Adrenal gland (tissue), 19 donors: ENCODE measurements at regions of chr17 and their contacts with region 1.

Region 1: DNA sequence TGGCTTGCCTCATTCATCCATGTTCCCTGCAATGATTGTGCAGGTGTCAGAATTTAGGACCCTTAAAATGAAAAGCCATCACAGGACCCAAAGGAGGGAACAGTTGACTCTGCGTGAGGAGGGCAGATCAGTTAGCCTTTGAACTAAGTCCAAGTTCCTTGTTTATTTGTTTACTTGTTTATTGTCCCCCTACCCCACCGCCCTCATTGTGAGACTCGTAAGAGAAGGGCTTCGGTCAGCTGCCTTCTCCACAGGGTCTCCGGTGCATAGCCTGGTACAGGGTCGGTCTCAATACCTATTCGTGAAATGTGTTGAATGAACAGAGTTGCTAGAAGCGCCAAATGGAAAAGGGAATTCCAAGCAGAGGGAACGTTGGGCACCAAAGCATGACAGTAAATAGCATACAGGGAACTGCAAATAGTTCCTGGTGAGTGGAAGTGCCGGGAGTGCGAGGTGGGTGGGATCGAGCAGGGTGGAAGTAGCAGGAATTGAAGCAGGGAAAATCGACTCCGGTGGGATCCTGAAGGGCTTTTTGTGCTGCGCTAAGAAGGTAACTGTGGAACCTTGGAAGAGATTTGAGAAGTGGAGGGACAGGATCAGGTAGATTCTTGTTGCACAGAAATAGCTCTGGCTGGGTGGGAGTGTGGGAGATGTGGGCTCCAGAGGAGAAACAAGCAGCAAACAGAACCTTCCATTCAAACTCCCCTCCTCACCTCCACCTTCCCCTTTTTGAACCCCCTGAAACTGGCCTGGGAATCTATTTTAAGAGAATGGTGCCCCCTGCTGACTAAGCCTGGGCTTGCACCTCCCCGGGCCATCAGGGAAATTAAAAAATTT is 12.7 kb downstream of the SLC35B1 start:
- DNase-seq: peak; percentile 37 to 81 (median 59)
- H3K4me3 ChIP-seq: no peak overlapping the region
- H3K27ac ChIP-seq: no peak overlapping the region
- H3K4me1 ChIP-seq: peaks cover 0 to 12% of the 10 kb centered on the region in 2 donors
- H3K27me3 ChIP-seq: no peaks in the 10 kb centered on the region
- CTCF ChIP-seq: peak; percentile 86 to 98 (median 92)
- POLR2A ChIP-seq: no peak

Region 2: GRCh38 chr17:49567871-49568694 is 127.0 kb before region 1 on chr17:
- intact Hi-C with region 1: loop called (anchors 2 kb)
- DNase-seq: peak; percentile 90 to 97 (median 95)
- H3K4me3 ChIP-seq: peak overlapping the region in 2 of 4 donors; percentile 23 to 46
- H3K27ac ChIP-seq: peak overlapping the region; percentile 38 to 83 (median 63)
- H3K4me1 ChIP-seq: peaks cover 4 to 21% of the 10 kb centered on the region in 2 donors
- H3K27me3 ChIP-seq: peaks cover 6% of the 10 kb centered on the region
- CTCF ChIP-seq: peak; percentile 89 to 100 (median 99)
- POLR2A ChIP-seq: peak in 1 of 2 donors; percentile 27